ENCODE measurements at regions of chr10 and their contacts with region 1.

Region 1: GRCh38 chr10:62594093-62594520 is 210.4 kb upstream of the ADO start:
- DNase-seq: peak; percentile 27
- H3K4me3 Mint-ChIP-seq: no peak overlapping the region
- H3K27ac Mint-ChIP-seq: no peak overlapping the region
- H3K4me1 Mint-ChIP-seq: peaks cover 19% of the 10 kb centered on the region
- H3K27me3 Mint-ChIP-seq: peaks cover 23% of the 10 kb centered on the region

Region 2: GRCh38 chr10:62467527-62467926 is 126.6 kb before region 1 on chr10:
- intact Hi-C with region 1: no loop called
- DNase-seq: no peak
- H3K4me3 Mint-ChIP-seq: no peak overlapping the region
- H3K27ac Mint-ChIP-seq: no peak overlapping the region
- H3K4me1 Mint-ChIP-seq: no peaks in the 10 kb centered on the region
- H3K27me3 Mint-ChIP-seq: peaks cover 10% of the 10 kb centered on the region

Region 3: DNA sequence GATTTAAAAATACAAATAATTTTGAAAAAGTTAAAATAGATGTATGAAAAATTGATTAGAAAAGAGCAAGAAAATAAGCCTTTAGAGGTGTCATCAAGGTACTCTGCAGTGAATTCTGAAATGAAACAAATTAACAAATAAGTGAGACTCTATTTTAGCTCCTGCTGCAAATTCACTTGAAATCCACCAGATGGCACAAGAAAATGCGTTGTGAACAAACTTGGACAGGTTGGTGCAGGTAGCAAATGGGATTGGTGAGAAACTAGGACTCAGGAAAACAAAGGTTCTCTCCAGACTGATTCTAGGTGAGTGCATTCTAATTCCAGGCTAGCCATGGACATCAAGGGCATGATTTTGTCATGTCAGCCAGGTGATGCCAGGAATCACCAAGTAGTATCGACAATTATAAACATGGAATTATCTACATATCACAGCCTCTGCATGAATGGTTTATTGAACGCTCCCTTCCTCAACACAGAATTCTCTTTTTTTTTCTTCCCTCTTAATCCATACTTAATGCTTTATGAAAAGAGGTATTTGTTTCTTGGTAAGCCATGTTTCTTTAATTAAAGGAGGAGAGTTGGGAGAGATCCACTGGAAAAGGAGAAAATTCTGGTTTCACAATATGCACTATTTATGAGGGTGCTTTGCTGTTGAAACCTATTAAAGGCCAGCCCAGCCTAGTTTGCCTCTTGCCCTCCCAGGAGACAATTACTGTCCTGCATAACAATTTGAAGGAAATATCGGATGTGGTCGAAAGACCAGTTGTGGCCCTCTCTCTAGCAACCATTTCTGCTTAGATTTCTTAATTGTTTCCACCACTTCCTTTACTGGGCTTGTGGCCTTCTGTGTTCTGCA is 101.9 kb before region 1 on chr10:
- intact Hi-C with region 1: loop called (anchors 5 kb)
- DNase-seq: no peak
- H3K4me3 Mint-ChIP-seq: no peak overlapping the region
- H3K27ac Mint-ChIP-seq: no peak overlapping the region
- H3K4me1 Mint-ChIP-seq: no peaks in the 10 kb centered on the region
- H3K27me3 Mint-ChIP-seq: peaks cover 18% of the 10 kb centered on the region

Region 4: DNA sequence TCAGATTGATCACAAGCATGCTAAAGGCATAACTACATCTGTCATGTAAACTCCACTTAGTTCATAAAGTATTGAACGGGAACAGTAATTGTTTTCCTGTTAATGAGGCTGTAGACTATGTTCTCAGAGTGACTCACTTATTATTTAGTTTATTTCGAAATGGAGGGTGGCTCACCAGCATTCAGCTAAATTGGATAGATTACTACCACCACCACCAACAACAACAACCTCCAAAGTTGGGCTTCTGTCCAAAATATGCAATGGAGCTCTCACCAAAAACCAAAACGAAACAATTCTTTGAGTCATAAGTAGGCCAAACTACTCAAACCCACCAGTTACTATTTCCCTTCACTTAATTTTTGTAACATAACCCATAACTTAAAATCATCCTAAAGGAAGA is 411.1 kb after region 1 on chr10:
- intact Hi-C with region 1: loop called (anchors 5 kb)
- DNase-seq: no peak
- H3K4me3 Mint-ChIP-seq: no peak overlapping the region
- H3K27ac Mint-ChIP-seq: no peak overlapping the region
- H3K4me1 Mint-ChIP-seq: peaks cover 16% of the 10 kb centered on the region
- H3K27me3 Mint-ChIP-seq: peaks cover 16% of the 10 kb centered on the region

Region 5: GRCh38 chr10:63083904-63084689 is 490.0 kb after region 1 on chr10:
- intact Hi-C with region 1: loop called (anchors 1 kb)
- DNase-seq: peak; percentile 14
- H3K4me3 Mint-ChIP-seq: no peak overlapping the region
- H3K27ac Mint-ChIP-seq: no peak overlapping the region
- H3K4me1 Mint-ChIP-seq: peaks cover 12% of the 10 kb centered on the region
- H3K27me3 Mint-ChIP-seq: peaks cover 28% of the 10 kb centered on the region

Region 6: GRCh38 chr10:63720072-63720537 is 1126.0 kb after region 1 on chr10:
- intact Hi-C with region 1: loop called (anchors 5 kb)
- DNase-seq: peak; percentile 17
- H3K4me3 Mint-ChIP-seq: peak overlapping the region; percentile 51
- H3K27ac Mint-ChIP-seq: no peak overlapping the region
- H3K4me1 Mint-ChIP-seq: peaks cover 34% of the 10 kb centered on the region
- H3K27me3 Mint-ChIP-seq: peaks cover 4% of the 10 kb centered on the region

Measured in activated T-helper 1 cell treated with anti-CD3 and anti-CD28 coated beads, Interleukin-12 subunit alpha, Interleukin-12 subunit beta, Interleukin-2, Interleukin-4 antibody, amounts not matched to agents 30 ng/mL and 10 ng/mL and 1 ng/mL, durations not matched to agents 14 hours and 24 hours and 36 hours (primary cell).